AG04449 (cell line): ENCODE measurements at regions of chr11 and their contacts with region 1.

Region 1: GRCh38 chr11:1832211-1832919 is 2.4 kb upstream of the SYT8 start:
- DNase-seq: no peak
- H3K4me3 ChIP-seq: no peak overlapping the region
- CTCF ChIP-seq: peak; percentile 99

Region 2: GRCh38 chr11:1497600-1497999 is 334.8 kb before region 1 on chr11:
- CTCF ChIA-PET with region 1: no interaction called
- POLR2A ChIA-PET with region 1: no interaction called
- DNase-seq: no peak
- H3K4me3 ChIP-seq: no peak overlapping the region
- CTCF ChIP-seq: no peak

Region 3: GRCh38 chr11:1598816-1599215 is 233.5 kb before region 1 on chr11:
- CTCF ChIA-PET with region 1: no interaction called
- POLR2A ChIA-PET with region 1: no interaction called
- DNase-seq: no peak
- H3K4me3 ChIP-seq: no peak overlapping the region
- CTCF ChIP-seq: no peak

Region 4: GRCh38 chr11:1682225-1682905 is 150.0 kb before region 1 on chr11:
- CTCF ChIA-PET with region 1: interaction called, 18 read pairs
- POLR2A ChIA-PET with region 1: no interaction called
- DNase-seq: no peak
- H3K4me3 ChIP-seq: no peak overlapping the region
- CTCF ChIP-seq: no peak

Region 5: DNA sequence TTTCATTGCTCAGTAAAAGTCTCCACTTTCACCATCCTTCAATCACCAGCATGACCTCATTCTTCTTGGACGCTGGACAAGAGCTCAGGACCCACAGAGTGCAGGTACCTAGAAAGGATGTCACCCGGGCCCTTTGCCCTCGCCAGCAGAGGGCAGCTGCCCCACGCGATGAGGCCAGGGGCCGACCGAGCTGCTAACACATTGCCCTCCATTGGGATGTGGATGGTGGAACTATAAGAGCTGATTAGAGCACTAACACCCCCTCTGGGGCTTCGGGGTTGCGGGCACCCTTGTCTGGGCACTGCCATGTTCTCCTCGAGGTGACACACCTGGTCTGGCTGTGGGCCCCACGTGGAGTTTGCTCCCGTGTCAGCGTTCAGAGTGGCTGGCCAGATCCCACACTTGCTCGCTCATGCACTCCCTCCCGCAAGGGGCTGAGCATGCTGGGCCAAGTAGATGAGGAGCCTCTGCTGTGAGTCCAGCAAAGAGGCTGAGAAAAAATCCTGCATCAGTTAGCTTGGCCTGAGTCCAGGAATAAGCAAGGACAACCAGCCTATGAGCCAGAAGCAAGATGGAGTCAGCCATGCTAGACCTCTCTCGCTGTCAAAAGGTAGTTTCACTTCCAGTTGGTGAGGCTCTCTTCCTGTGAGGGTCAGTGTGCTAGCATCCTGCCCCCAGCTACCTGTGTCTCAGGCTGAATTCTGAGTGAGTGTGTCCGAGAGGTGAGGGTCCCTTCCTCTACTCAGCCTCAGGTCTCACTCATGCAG is 125.5 kb before region 1 on chr11:
- CTCF ChIA-PET with region 1: interaction called, 31 read pairs
- POLR2A ChIA-PET with region 1: no interaction called
- DNase-seq: no peak
- H3K4me3 ChIP-seq: no peak overlapping the region
- CTCF ChIP-seq: peak; percentile 2

Region 6: GRCh38 chr11:1817511-1817910 is 14.9 kb before region 1 on chr11:
- CTCF ChIA-PET with region 1: interaction called, 20 read pairs
- POLR2A ChIA-PET with region 1: no interaction called
- DNase-seq: no peak
- H3K4me3 ChIP-seq: no peak overlapping the region
- CTCF ChIP-seq: no peak

Region 7: DNA sequence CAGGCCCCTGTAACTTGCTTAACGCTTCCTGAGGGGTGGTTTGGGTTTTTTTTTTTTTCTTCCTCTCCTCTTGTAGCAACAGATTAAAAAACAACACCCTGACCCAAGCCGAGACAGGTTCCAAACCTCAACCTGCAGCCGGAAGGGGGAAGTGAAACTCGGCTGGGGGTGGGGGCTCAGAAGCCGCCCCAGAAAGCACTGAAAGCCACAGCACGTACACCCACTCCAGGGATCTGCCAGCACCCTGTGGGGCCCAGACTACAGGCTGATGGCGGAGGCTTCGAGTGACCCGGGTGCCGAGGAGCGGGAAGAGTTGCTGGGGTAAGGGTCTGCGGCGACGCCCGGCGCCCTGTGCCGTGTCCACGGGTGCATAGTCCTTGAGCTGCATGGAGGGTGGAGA is 20.5 kb after region 1 on chr11 and contains the start of gene LSP1:
- CTCF ChIA-PET with region 1: interaction called, 22 read pairs
- POLR2A ChIA-PET with region 1: no interaction called
- DNase-seq: no peak
- H3K4me3 ChIP-seq: no peak within 1 kb of the TSS
- CTCF ChIP-seq: no peak

Region 8: GRCh38 chr11:1946812-1947484 is 114.6 kb after region 1 on chr11 and contains the start of gene MRPL23:
- CTCF ChIA-PET with region 1: interaction called, 26 read pairs
- POLR2A ChIA-PET with region 1: no interaction called
- DNase-seq: no peak
- H3K4me3 ChIP-seq: no peak within 1 kb of the TSS
- CTCF ChIP-seq: no peak